Activated naive CD4-positive, alpha-beta T cell treated with anti-CD3 and anti-CD28 coated beads for 36 hours (primary cell): ENCODE measurements at regions of chr18 and their contacts with region 1.

Region 1: DNA sequence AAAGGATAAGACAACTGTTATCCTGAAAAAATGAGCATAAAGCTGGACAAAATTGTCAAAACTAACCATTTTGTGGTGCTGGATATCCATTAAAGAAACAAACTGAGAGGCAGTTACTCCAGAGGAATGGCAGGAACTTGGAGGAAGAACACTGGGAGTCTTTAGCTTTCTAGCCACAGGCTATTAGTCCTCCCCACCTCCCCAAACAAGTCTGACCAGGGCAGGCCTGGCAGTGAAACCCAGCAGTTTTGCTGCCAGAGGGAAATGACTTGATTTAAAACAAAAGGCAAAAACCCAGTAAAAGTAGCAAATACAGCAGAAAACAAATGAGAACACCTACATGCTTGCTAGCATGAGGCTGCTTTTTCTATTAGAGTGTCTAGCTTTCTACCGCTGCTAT is 34.9 kb downstream of the OSBPL1A start:
- DNase-seq: no peak
- H3K4me3 Mint-ChIP-seq: no peak overlapping the region
- H3K27ac Mint-ChIP-seq: no peak overlapping the region
- H3K4me1 Mint-ChIP-seq: no peaks in the 10 kb centered on the region
- H3K27me3 Mint-ChIP-seq: no peaks in the 10 kb centered on the region

Region 2: DNA sequence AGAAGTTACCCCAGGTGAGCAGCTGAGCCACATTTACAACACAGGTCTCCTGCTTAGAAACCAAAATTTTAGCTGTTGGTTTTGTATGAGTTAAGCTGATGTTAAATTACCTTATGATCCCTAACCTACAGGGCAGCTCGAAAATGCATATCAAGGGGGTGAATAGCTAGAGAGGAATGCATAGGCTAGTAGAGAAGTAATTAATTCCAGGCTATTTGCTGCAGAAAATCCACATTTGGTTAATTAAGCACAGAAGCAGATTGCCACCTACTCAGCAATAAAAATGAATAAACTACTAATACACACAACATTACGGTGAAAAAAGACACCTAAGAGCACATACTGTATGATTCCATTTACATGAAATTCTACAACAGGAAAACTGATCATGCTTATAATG is 56.6 kb before region 1 on chr18:
- CTCF ChIA-PET with region 1: no interaction called
- intact Hi-C with region 1: no loop called
- DNase-seq: no peak
- H3K4me3 Mint-ChIP-seq: no peak overlapping the region
- H3K27ac Mint-ChIP-seq: no peak overlapping the region
- H3K4me1 Mint-ChIP-seq: no peaks in the 10 kb centered on the region
- H3K27me3 Mint-ChIP-seq: no peaks in the 10 kb centered on the region

Region 3: DNA sequence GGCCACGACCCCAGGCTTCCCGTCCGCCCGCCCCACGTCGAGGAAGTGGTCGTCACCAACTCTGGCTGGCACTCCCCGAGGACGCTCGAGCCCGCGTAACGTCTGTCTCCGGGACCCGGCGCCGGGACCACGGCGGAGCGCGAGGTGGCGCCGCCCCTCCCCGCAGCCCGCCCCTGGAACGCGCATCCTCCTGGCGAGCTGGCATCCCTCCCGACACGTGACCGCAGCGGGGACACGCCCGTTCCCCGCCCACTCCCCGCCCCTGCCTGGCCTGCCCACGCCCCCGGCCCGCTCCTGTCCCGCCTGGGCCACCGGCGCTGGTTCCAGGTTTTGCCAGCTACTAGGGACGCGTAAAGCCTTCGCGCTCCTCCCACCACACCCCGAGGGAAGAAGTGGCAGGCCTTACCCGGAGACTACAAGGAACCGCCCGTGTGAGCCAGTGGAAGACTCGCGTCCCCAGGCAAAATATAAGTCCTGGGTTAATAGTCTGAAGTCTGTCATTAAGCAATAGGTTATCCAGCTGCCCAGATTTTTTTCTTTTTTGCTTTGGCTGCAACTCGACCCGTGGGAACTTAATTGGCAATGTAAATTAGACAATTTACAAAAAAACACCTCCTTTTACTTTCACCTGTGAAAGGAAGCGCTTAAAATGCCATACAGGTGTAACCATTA is 35.1 kb after region 1 on chr18 and contains the start of gene OSBPL1A:
- CTCF ChIA-PET with region 1: interaction called, 9 read pairs
- intact Hi-C with region 1: loop called (anchors 1 kb)
- DNase-seq: peak; percentile 88
- H3K4me3 Mint-ChIP-seq: peak within 1 kb of the TSS; percentile 76
- H3K27ac Mint-ChIP-seq: no peak within 1 kb of the TSS
- H3K4me1 Mint-ChIP-seq: peaks cover 18% of the 10 kb centered on the region
- H3K27me3 Mint-ChIP-seq: peaks cover 15% of the 10 kb centered on the region
- total RNA-seq, gene OSBPL1A: 2.4 to 2.7 TPM

Region 4: DNA sequence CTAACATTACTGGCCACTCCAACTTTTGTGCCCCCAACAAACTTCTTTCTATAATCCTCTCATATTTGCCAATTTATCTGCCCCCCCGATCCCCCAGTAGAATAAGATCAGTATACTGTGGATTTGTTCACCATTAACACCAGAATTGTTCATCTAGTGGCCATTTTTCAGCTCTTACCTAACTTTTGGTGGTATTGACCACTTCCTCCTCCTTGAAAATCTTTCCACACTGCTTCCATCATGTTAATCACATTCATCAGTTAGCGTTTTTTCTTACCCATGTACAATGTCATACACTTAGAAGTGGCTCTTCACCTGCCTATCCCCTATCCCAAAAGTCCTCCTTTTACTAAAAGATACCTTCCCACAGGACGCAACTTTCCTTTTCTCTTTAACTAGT is 69.9 kb after region 1 on chr18:
- CTCF ChIA-PET with region 1: interaction called, 11 read pairs
- intact Hi-C with region 1: loop called (anchors 5 kb)
- DNase-seq: no peak
- H3K4me3 Mint-ChIP-seq: no peak overlapping the region
- H3K27ac Mint-ChIP-seq: no peak overlapping the region
- H3K4me1 Mint-ChIP-seq: peaks cover 10% of the 10 kb centered on the region
- H3K27me3 Mint-ChIP-seq: no peaks in the 10 kb centered on the region

Region 5: DNA sequence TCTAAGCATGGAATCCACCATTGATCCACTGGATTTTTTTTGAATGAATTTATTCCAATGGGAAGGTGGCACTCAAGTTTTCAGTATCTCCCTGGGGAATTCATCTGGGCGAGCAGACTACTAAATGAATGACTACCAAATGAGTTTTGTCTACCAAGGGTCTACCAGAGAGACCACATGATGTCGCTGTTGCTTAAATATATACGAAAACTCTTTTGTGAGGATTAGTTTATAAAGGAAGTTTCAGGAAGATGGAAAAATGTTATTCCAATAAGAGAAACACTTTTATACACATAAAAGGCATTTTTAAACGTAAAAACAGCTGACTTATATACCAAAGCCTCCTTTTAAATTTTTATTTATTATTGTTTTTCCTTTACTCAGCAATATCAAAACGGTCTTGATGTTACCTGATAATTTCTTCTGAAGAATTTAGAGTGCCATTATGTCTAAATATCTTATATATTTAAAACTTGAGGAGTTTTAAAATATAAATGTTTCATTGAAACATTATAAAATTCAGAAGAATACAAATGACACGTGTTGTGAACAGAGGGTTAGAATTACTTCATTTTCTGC is 237.4 kb after region 1 on chr18:
- CTCF ChIA-PET with region 1: interaction called, 4 read pairs
- intact Hi-C with region 1: loop called (anchors 2 kb)
- DNase-seq: no peak
- H3K4me3 Mint-ChIP-seq: no peak overlapping the region
- H3K27ac Mint-ChIP-seq: no peak overlapping the region
- H3K4me1 Mint-ChIP-seq: no peaks in the 10 kb centered on the region
- H3K27me3 Mint-ChIP-seq: peaks cover 4% of the 10 kb centered on the region